Left ventricle myocardium superior (tissue), 1 donor: ENCODE measurements at regions of chr6 and their contacts with region 1.

Region 1: DNA sequence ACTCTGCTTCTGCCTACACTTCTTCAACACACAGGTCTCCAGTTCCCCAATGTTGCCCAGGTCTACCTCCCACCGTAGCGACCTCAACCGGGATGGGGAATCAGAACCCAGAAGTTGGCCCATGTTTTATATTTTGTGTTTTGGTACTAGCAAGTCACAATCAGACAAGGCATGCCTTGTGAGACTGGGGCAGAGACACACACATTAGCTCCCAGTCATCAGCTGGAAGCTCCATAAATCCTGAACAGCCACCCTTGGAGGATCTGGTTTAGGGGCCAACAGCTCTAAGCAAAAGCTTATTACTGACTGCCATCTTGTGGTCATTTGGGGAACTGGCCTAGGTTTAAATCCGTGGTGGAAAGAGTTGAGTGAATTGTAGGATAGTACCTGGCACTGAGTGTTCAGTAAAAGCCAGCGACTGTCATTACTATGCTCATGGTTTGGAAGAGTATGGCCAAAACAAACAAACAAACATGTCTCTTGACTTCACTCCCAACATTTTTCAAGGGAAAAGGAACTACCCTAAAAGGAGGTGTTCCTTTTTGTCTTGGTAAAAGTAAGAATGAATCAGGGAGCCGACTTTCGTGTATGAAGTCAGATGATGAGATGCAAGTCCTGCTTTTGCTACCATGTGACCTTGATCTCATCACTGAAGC is 40.5 kb downstream of the PIM1 start:
- DNase-seq: no peak
- ATAC-seq: peak; percentile 86

Region 2: GRCh38 chr6:37029249-37029971 is 181.0 kb before region 1 on chr6:
- intact Hi-C with region 1: loop called (anchors 10 kb)
- DNase-seq: peak; percentile 81
- ATAC-seq: peak; percentile 94

Region 3: GRCh38 chr6:37083243-37084138 is 127.0 kb before region 1 on chr6:
- intact Hi-C with region 1: no loop called
- DNase-seq: peak; percentile 86
- ATAC-seq: peak; percentile 97